ENCODE measurements at regions of chr16 and their contacts with region 1.

Region 1: DNA sequence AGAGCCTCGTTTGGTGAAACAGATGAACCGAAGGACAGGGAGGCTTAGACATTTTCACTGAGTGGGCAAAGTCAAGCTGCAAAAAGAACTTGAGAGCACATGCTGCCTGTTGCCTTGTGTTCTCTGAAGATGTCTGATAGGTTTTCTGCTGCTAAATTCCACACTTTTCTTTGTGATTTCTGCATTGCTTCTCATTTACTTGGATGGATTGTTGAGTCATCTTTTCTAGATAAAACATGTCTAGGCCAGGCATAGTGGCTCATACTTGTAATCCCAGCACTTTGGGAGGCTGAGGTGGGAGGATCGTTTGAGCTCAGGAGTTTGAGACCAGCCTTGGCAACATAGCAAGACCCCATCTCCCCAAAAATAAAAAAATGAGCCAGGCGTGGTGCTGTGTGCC is 80.4 kb upstream of the CLEC18A start:
- DNase-seq: no peak
- ATAC-seq: no peak
- H3K4me3 ChIP-seq: no peak overlapping the region
- H3K27ac ChIP-seq: no peak overlapping the region
- H3K4me1 ChIP-seq: peaks cover 0 to 12% (median under 1%) of the 10 kb centered on the region in 12 donors
- H3K27me3 ChIP-seq: no peaks in the 10 kb centered on the region
- CTCF ChIP-seq: no peak
- POLR2A ChIP-seq: no peak

Region 2: DNA sequence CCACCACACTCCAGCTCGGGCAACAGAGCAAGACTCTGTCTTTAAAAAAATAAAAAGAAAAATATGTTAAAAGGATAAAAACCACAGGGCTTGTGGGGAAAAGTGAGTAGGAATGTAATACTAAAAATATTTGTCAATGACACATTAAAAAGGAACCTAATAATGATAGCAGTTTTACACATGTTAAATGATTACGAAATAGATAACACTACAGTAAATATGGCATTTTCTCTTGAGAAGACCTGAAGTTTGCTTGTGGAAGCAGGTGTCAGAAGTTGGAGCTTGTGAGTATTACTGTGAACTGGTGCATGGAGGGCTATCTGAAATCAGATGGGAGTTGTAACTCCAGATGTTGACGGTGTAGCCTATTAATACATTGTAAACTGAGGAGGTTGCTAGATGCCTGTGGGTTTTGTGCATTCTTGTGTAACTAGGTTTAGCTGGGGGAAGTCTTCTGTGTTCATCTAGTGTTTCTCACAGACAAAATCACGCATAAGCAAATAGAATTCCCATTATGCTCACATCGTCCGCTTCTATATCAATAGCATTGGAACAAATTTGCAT is 36.2 kb after region 1 on chr16:
- intact Hi-C with region 1: loop called in 2 of 10 experiments (anchors 2 to 5 kb)
- DNase-seq: no peak
- ATAC-seq: no peak
- H3K4me3 ChIP-seq: no peak overlapping the region
- H3K27ac ChIP-seq: no peak overlapping the region
- H3K4me1 ChIP-seq: no peaks in the 10 kb centered on the region
- H3K27me3 ChIP-seq: no peaks in the 10 kb centered on the region
- CTCF ChIP-seq: no peak
- POLR2A ChIP-seq: no peak

Measured in heart left ventricle (tissue), 16 donors.